ENCODE measurements at regions of chr15 and their contacts with region 1.

Region 1: DNA sequence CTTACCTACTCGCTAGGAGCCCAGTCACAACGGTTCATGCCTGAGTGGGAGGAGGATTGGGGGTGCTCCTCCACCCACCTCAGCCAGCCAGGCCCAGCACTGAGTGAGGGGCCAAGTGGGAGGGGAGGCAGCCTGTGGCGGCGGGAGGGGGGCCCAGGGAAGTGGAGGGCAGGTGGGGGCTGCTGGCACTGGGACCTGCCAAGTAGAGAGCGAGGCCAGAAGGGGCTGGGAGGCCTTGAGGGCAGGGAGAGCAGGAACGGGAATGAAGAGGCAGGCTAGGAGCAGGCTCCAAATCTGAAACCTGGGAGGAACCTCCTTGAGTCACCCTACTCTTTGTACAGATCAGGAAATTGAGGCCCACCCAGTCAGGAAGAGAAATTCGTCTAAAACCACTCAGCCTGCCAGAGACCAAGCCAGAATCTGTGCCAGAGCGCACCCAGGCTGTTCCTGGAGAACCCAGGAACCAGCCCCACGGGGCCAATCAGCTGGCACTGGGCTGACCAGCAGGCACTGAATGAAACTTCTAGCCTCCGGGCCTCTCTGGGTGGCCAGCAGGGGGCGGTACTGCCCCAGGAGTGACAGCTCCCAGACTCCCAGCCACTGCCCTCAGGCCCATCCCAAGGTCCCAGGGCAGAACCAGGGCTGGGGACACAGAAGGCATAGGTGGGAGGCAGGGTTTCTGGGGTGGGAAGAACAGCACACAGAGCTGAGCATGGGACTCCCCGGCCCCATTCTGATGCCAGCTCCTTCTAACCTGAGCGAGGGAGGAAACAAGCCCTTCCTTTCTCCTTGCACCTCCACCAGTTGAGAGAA is 14.8 kb upstream of the CYP11A1 start:
- DNase-seq: peak; percentile 98
- H3K4me3 Mint-ChIP-seq: no peak overlapping the region
- H3K27ac Mint-ChIP-seq: peak overlapping the region; percentile 90
- H3K4me1 Mint-ChIP-seq: peaks cover 76% of the 10 kb centered on the region
- H3K27me3 Mint-ChIP-seq: no peaks in the 10 kb centered on the region
- CTCF ChIP-seq: peak; percentile 99

Region 2: DNA sequence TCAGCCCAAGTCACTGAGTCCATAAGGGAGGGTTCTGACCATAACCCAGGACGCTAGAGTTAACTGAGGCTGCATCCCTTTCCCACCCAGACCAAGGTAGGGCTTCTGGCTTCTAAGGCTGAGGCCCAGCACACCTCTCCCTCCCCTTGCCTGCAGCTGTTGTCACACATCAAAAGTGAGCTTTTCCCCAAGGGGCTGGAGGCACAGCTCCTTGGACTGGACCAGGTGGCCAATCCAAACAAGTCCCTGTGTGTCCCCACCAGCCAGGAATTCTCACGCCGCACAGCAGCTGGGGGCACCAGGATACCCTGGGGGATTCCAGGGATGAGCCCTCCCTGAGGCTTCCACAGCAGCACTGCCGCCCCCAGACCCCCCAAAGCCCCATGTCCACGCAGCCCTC is 274.1 kb before region 1 on chr15:
- CTCF ChIA-PET with region 1: no interaction called
- intact Hi-C with region 1: no loop called
- DNase-seq: no peak
- H3K4me3 Mint-ChIP-seq: no peak overlapping the region
- H3K27ac Mint-ChIP-seq: no peak overlapping the region
- H3K4me1 Mint-ChIP-seq: peaks cover 11% of the 10 kb centered on the region
- H3K27me3 Mint-ChIP-seq: peaks cover 37% of the 10 kb centered on the region
- CTCF ChIP-seq: no peak

Region 3: DNA sequence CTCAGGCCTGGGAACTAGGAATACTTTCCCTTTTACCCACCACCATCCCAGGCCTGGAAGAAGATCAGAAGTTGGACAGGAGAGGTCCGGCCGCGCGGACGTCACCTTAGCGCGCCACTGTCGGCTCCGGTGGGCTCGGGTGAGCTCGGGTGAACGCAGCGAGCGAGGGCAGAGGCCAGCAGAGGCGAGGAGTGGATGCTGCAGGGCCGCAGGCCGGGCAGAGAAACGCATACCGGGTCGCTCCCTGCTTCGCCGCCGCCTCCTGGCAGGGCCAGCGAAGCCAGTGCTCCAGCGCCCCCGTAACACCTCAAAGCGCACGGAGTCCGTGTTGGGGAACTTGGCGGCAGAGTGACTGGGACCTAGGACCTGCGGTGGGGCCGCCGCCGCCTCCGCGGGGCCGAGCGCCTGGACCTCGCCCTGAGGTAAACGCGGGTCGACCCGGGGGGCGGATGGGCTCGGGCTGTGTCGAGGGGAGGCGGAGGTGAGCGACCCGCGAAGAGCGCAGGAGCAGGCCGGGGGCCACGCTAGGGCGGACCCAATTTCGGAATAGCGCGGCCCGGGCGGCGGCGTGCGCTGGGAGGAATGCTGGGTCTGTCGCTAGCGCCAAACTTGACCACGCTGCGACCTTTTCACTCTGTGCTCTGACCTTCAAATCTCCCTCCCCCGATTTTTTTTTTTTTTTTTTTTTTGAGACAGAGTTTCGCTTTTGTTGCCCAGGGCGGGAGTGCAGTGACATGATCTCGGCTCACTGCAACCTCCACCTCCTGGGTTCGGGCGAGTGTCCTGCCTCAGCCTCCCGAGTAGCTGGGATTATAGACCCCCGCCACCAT is 16.4 kb before region 1 on chr15:
- CTCF ChIA-PET with region 1: no interaction called
- intact Hi-C with region 1: no loop called
- DNase-seq: no peak
- H3K4me3 Mint-ChIP-seq: no peak overlapping the region
- H3K27ac Mint-ChIP-seq: no peak overlapping the region
- H3K4me1 Mint-ChIP-seq: peaks cover 10% of the 10 kb centered on the region
- H3K27me3 Mint-ChIP-seq: peaks cover 90% of the 10 kb centered on the region
- CTCF ChIP-seq: no peak

Region 4: DNA sequence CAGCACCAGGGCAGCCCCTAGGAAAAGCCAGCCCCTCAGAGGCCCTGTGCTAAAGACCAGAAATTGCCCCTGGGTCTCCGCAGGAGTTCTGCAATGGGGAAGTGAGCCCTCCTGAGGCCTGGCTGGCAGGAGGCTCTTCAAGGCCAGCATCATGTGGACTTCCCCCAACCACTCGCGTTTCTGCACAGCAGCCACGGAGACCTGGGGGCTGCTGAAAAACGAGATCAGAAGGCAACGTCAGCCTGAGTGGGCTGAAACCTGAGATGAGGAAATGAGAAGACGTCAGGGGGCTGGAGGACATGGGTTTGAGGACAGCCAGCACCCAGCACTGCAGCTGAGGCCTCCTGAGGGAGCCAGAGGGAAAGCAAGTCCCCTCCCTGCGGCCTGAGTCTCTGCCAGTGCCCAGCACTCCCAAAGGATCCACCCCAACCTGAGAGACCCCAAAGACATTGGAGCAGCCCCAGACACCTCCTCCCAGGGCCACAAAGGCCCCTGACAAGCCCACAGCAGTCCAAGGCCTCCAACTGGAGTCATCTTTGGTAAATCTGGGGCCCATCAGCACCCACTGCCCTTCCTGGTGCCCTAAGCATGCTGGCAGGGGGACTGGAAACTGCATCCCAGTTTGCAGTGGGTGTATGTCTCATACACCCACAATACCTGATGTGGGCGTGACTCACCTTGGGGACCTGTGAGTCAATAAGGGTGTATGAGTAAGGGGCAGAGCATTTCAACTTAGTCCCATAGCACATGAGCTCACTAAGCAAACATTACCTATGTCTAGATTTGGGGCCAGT is 14.4 kb after region 1 on chr15:
- CTCF ChIA-PET with region 1: interaction called, 25 read pairs
- intact Hi-C with region 1: no loop called
- DNase-seq: peak; percentile 91
- H3K4me3 Mint-ChIP-seq: peak overlapping the region; percentile 52
- H3K27ac Mint-ChIP-seq: peak overlapping the region; percentile 98
- H3K4me1 Mint-ChIP-seq: peaks cover 77% of the 10 kb centered on the region
- H3K27me3 Mint-ChIP-seq: no peaks in the 10 kb centered on the region
- CTCF ChIP-seq: no peak

Measured in Calu3 (cell line).